GM12878 (cell line): ENCODE measurements at regions of chr3 and their contacts with region 1.

Region 1: DNA sequence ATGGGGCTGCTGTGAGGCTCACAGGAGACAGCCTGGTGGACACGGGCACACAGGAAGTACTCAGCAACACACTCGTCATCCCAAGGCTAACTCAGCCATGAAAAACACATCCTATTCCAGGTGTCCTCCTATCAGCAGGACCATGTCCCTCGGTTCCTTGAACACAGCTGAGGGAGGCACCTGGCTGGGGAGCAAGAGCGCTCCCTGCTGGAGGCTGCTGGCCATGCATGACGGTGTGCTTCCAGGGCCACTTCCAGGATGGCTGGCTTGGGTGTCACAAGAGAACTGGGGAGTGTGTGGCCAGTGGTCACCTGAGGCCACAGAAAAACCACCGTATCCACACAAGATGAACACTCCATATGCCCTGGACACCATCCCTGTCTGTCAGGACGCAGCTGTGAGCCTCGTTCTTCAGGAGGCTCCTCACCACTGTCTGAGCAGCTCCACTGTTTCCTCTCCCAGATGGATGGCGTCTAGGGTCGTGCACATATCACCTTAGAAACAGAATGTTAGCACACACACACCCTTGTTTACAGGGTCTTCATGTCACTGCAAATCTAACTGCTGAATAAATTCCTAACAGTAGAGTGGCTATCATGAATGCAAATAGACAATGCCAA is 31.0 kb downstream of the POC1A start:
- DNase-seq: no peak
- ATAC-seq: peak; percentile 91
- H3K4me3 ChIP-seq: no peak overlapping the region
- H3K27ac ChIP-seq: 0 out of 2 replicates have a peak overlapping the region, but pooled peaks have one; percentile 13
- H3K4me1 ChIP-seq: peaks cover 32% of the 10 kb centered on the region
- H3K27me3 ChIP-seq: no peaks in the 10 kb centered on the region
- CTCF ChIP-seq: peak; percentile 95 to 97 (median 97); a peak in 5 of 6 replicates
- EP300 ChIP-seq: no peak
- POLR2A ChIP-seq: no peak
- RAD21 ChIP-seq: peak; percentile 96

Region 2: GRCh38 chr3:52014613-52015012 is 108.6 kb before region 1 on chr3:
- CTCF ChIA-PET with region 1: interaction called, 13 read pairs
- POLR2A ChIA-PET with region 1: interaction called, 4 read pairs
- RAD21 ChIA-PET with region 1: interaction called, 5 read pairs
- SMC1A ChIA-PET with region 1: interaction called, 5 read pairs
- in situ Hi-C with region 1: no loop called
- intact Hi-C with region 1: no loop called
- DNase-seq: no peak
- ATAC-seq: peak; percentile 22
- H3K4me3 ChIP-seq: no peak overlapping the region
- H3K27ac ChIP-seq: no peak overlapping the region
- H3K4me1 ChIP-seq: peaks cover 4% of the 10 kb centered on the region
- H3K27me3 ChIP-seq: no peaks in the 10 kb centered on the region
- CTCF ChIP-seq: 0 out of 6 replicates have a peak, but pooled peaks of 1 of the 3 experiments have one; percentile 17
- EP300 ChIP-seq: no peak
- POLR2A ChIP-seq: no peak
- RAD21 ChIP-seq: peak; percentile 3; the same call in 1 of the 2 replicates

Region 3: DNA sequence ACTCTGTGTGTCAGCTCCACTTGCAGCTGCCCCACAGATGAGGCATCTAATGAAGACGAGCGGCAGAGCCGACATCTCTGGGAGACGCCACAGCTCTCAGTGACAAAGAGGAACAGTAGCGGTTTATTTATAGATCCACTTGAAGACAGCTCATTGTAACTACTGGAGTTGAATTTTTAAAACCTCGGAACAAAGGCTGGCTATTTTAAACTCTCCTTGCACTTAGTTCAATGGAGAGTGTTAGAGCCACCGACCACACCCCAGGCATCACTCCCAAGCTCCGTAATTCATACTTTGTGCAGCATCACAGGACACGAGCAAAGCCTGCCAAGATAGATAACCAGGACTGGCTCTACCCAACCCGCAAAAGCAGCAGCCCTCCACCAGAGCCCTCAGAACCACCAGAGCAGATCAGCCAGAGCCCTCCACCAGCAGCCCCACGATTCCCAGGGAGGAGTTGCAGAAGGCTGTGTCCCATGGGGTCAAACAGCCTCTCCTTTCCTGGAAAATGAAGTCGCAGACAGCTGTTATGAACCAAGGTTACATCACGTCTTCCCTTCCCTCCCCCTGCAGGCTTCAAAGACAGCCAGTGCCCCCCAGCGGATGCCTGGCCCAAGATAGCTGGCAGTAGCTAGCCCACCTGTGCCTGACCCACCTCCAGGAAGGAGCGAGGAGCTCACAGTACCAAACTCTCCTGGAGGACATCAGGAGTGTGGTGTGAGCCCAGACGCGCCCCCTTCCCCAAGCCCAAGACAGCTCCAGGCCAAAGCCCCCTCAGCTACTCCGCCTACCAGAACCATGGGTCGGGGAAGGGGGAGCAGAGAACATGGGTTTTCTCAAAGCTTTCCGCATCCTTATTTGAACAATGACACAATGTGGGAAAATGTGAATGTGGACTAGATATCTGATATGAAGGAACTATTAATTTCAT is 14.6 kb before region 1 on chr3:
- CTCF ChIA-PET with region 1: interaction called, 17 read pairs
- POLR2A ChIA-PET with region 1: no interaction called
- RAD21 ChIA-PET with region 1: no interaction called
- SMC1A ChIA-PET with region 1: interaction called, 8 read pairs
- in situ Hi-C with region 1: no loop called
- intact Hi-C with region 1: no loop called
- DNase-seq: no peak
- ATAC-seq: peak; percentile 51; the same call in 2 of the 3 replicates
- H3K4me3 ChIP-seq: no peak overlapping the region
- H3K27ac ChIP-seq: no peak overlapping the region
- H3K4me1 ChIP-seq: no peaks in the 10 kb centered on the region
- H3K27me3 ChIP-seq: no peaks in the 10 kb centered on the region
- CTCF ChIP-seq: peak in 1 of 3 experiments; percentile 5; a peak in 2 of 6 replicates
- EP300 ChIP-seq: no peak
- POLR2A ChIP-seq: no peak
- RAD21 ChIP-seq: peak; percentile 37; the same call in 1 of the 2 replicates

Region 4: GRCh38 chr3:52136513-52136912 is 13.3 kb after region 1 on chr3:
- CTCF ChIA-PET with region 1: interaction called, 10 read pairs
- POLR2A ChIA-PET with region 1: interaction called, 4 read pairs
- RAD21 ChIA-PET with region 1: interaction called, 3 read pairs
- SMC1A ChIA-PET with region 1: interaction called, 4 read pairs
- in situ Hi-C with region 1: no loop called
- intact Hi-C with region 1: no loop called
- DNase-seq: no peak
- ATAC-seq: no peak
- H3K4me3 ChIP-seq: no peak overlapping the region
- H3K27ac ChIP-seq: no peak overlapping the region
- H3K4me1 ChIP-seq: peaks cover 21% of the 10 kb centered on the region
- H3K27me3 ChIP-seq: no peaks in the 10 kb centered on the region
- CTCF ChIP-seq: no peak
- EP300 ChIP-seq: no peak
- POLR2A ChIP-seq: no peak
- RAD21 ChIP-seq: no peak

Region 5: GRCh38 chr3:52144034-52144795 is 21.0 kb after region 1 on chr3:
- CTCF ChIA-PET with region 1: interaction called, 18 read pairs
- POLR2A ChIA-PET with region 1: no interaction called
- RAD21 ChIA-PET with region 1: interaction called, 8 read pairs
- SMC1A ChIA-PET with region 1: interaction called, 5 read pairs
- in situ Hi-C with region 1: no loop called
- intact Hi-C with region 1: no loop called
- DNase-seq: no peak
- ATAC-seq: peak; percentile 100
- H3K4me3 ChIP-seq: no peak overlapping the region
- H3K27ac ChIP-seq: no peak overlapping the region
- H3K4me1 ChIP-seq: peaks cover 5% of the 10 kb centered on the region; the same call in 1 of the 2 replicates
- H3K27me3 ChIP-seq: no peaks in the 10 kb centered on the region
- CTCF ChIP-seq: peak; percentile 92 to 97 (median 94); a peak in 5 of 6 replicates
- EP300 ChIP-seq: no peak
- POLR2A ChIP-seq: no peak
- RAD21 ChIP-seq: peak; percentile 93